ENCODE measurements at regions of chr7 and their contacts with region 1.

Region 1: GRCh38 chr7:65448816-65449504 is 75.3 kb downstream of the ZNF92 start:
- DNase-seq: peak; percentile 72
- ATAC-seq: peak; percentile 72
- H3K4me3 ChIP-seq: no peak overlapping the region
- H3K27ac ChIP-seq: no peak overlapping the region
- H3K4me1 ChIP-seq: no peaks in the 10 kb centered on the region
- H3K27me3 ChIP-seq: no peaks in the 10 kb centered on the region; the same call in 1 of the 2 replicates
- CTCF ChIP-seq: no peak
- POLR2A ChIP-seq: no peak
- RAD21 ChIP-seq: no peak

Region 2: DNA sequence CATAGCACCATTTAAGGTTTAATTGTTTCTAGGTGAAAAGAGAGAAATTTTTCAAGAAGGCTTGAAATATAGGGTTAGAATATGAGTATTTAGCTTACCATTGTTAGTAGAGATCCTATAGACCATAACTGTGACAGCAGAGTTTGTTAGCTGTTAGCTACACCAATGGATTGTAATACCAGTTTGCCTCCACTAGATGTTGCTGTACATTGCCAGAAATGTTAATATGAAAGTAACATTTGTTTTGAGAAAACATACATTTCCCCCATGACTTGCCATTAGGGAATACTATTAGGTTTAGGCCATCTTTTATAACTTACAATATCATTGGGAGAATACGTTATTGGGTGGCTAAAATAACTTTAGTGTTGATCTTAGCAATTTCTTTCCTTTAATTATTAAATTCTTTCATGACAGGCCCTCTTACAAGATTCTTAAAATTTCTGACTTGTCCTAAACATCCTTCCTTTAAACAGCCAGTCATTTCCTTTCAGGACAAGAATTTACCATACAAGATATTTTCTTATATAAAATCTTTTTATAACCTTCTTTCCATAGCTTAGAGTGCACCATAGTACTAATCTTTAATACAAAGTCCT is 497.6 kb before region 1 on chr7:
- CTCF ChIA-PET with region 1: no interaction called
- POLR2A ChIA-PET with region 1: no interaction called
- dilution Hi-C with region 1: no loop called
- in situ Hi-C with region 1: no loop called
- intact Hi-C with region 1: loop called (anchors 1 kb)
- DNase-seq: peak; percentile 54
- ATAC-seq: peak; percentile 94
- H3K4me3 ChIP-seq: no peak overlapping the region
- H3K27ac ChIP-seq: no peak overlapping the region
- H3K4me1 ChIP-seq: no peaks in the 10 kb centered on the region
- H3K27me3 ChIP-seq: peaks cover 20% of the 10 kb centered on the region
- CTCF ChIP-seq: peak; percentile 82
- POLR2A ChIP-seq: no peak
- RAD21 ChIP-seq: peak; percentile 84

Region 3: DNA sequence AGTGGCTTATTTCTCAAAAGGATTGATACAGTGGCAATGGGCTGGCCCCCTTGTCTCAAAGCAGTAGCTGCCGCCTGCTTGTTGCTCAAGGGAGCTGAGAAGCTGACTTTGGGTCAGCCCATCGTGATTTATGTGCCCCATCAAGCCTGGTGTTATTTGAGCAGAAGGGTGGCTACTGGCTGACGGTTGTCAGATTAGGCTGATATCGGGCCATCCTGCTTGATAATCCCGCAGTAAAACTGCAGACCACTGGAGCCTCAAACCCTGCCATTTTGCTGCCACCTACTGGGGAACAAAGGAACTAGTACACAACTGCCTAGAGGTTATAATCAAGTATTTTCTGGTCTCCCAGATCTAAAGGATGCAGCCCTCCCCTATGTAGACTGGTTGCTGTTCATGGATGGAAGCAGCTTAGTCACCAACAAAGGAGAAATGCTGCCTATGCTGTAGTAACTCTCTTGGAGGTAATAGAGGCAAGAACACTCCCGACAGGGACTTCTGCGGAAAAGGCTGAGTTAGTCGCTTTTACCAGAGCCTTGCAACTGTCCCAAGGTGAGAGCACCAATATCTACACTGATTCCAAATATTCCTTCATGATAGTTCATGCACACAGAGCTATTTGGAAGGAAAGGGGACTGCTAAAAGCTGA is 141.2 kb before region 1 on chr7:
- CTCF ChIA-PET with region 1: no interaction called
- POLR2A ChIA-PET with region 1: no interaction called
- dilution Hi-C with region 1: no loop called
- in situ Hi-C with region 1: no loop called
- intact Hi-C with region 1: loop called (anchors 10 kb)
- DNase-seq: peak; percentile 66
- ATAC-seq: peak; percentile 98
- H3K4me3 ChIP-seq: no peak overlapping the region
- H3K27ac ChIP-seq: no peak overlapping the region
- H3K4me1 ChIP-seq: no peaks in the 10 kb centered on the region
- H3K27me3 ChIP-seq: no peaks in the 10 kb centered on the region
- CTCF ChIP-seq: peak; percentile 81
- POLR2A ChIP-seq: no peak
- RAD21 ChIP-seq: peak; percentile 86

Measured in IMR-90 (cell line).